HEK293 (cell line): ENCODE measurements at regions of chr3 and their contacts with region 1.

Region 1: GRCh38 chr3:10010486-10011465 is 15.5 kb upstream of the FANCD2 start:
- H3K4me3 ChIP-seq: peak overlapping the region; percentile 53
- H3K27ac ChIP-seq: peak overlapping the region; percentile 16; the same call in 1 of the 2 replicates
- H3K4me1 ChIP-seq: peaks cover 9% of the 10 kb centered on the region; the same call in 1 of the 2 replicates
- CTCF ChIP-seq: no peak

Region 2: GRCh38 chr3:9826815-9827567 is 183.8 kb before region 1 on chr3:
- CTCF ChIA-PET with region 1: no interaction called
- POLR2A ChIA-PET with region 1: no interaction called
- H3K4me3 ChIP-seq: no peak overlapping the region
- H3K27ac ChIP-seq: no peak overlapping the region
- H3K4me1 ChIP-seq: no peaks in the 10 kb centered on the region
- CTCF ChIP-seq: no peak

Region 3: GRCh38 chr3:9986237-9986725 is 24.5 kb before region 1 on chr3:
- CTCF ChIA-PET with region 1: interaction called, 5 read pairs
- POLR2A ChIA-PET with region 1: interaction called, 10 read pairs
- H3K4me3 ChIP-seq: peak overlapping the region; percentile 61
- H3K27ac ChIP-seq: peak overlapping the region; percentile 78; the same call in 1 of the 2 replicates
- H3K4me1 ChIP-seq: peaks cover 4% of the 10 kb centered on the region
- CTCF ChIP-seq: no peak

Region 4: GRCh38 chr3:10026084-10026890 is 15.5 kb after region 1 on chr3 and contains the start of gene FANCD2:
- CTCF ChIA-PET with region 1: no interaction called
- POLR2A ChIA-PET with region 1: interaction called, 11 read pairs
- H3K4me3 ChIP-seq: peak within 1 kb of the TSS; percentile 82
- H3K27ac ChIP-seq: peak within 1 kb of the TSS; percentile 86
- H3K4me1 ChIP-seq: peaks cover 2% of the 10 kb centered on the region; the same call in 1 of the 2 replicates
- CTCF ChIP-seq: peak; percentile 60

Region 5: DNA sequence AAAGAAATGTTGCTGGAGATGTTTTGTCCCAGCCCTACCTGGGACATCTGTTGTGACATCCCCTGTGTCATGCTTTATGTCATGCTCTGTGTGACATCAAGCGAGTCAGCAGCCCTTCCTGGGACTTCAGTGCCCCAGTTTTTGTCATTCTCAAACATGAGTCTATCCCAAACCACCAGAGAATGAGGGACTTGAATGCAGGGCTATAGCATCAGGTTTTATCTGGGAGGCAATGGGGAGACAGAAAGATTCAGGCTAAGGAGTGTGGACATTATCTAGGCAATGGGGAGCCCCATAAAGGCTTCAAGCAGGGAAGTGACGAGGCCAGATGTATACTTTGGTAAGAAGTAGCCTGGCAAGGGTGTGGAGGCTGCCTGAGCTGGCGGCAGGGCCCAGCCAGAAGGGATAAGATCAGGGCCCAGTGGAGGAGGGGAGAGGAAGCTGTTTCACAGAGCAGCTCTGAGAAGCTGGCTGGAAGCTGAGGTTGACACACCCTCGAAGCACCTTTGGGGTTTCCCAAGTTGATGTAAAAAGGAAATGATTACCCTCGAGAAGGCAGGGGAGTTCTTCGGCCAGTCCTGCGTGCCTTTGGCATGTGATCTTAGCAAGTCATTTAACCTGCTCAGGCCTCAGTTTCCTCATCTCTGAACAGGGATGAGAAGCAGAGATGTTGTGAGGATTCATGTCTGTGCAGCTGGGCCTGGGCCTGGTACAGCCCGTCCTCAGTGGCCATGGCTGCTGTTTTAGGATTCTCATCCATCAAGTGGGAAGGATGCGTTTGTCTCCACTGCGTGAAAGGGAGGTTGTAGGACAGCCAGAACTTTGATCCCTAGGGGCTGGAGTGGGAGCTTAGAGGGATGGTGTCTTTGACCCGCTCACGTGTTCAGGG is 188.2 kb after region 1 on chr3:
- CTCF ChIA-PET with region 1: no interaction called
- POLR2A ChIA-PET with region 1: no interaction called
- H3K4me3 ChIP-seq: no peak overlapping the region
- H3K27ac ChIP-seq: no peak overlapping the region
- H3K4me1 ChIP-seq: no peaks in the 10 kb centered on the region
- CTCF ChIP-seq: no peak